Prostate gland (tissue), 2 donors: ENCODE measurements at regions of chr15 and their contacts with region 1.

Region 1: DNA sequence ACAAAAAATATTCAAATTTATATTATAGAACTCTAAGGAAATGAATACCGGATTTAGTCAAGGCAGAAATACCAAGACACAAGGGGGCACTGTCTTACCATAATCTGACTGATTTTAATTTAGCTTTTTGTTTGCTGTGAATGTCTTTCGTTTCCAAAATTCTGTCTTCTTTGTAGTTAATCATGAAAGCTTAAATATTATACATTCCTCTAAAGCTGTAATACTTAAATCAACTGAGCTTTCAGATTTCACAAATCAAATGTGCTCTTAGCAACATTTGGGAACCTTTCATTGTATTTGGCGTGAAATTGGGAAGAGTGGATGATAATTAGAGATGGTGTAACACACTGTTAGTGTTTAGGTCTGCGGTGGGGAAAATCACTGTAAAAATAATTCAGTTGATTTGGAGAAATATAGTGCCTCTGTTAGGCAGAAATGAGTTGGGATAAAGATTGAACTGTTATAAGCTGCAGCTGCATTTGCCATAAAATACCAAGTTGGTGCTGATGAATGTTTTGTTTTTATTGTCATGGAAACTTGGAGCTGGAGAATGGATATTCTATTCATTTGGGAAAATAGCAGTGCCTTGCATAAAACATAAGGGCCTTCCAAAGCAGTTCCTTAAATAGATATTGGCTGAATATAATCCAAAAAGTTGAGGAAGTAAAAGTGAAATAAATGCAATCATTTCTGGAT is 228.2 kb downstream of the TCF12 start:
- DNase-seq: peak; percentile 37
- H3K4me3 ChIP-seq: no peak overlapping the region
- H3K27ac ChIP-seq: no peak overlapping the region
- H3K4me1 ChIP-seq: peaks cover 5% of the 10 kb centered on the region
- H3K27me3 ChIP-seq: no peaks in the 10 kb centered on the region
- CTCF ChIP-seq: peak; percentile 14 to 84 (median 72)
- POLR2A ChIP-seq: no peak

Region 2: DNA sequence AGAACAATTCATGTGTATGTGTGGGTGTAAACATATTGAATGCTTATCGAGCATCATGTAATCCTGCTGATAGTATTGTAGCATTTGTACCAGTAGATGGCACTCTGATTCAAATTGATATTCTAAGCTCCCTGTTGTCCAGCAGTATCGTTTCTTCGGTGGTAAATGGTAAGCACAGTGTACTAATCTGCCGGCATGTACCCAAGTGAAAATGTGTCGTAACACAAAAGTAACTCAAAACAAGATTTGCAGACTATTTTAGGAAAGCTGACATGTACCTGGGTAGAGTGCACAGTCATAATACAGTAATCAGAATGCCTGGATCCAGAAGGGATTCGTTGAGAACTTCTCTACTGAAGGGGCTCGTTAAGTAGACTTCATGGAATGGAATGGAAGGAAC is 650.0 kb before region 1 on chr15:
- intact Hi-C with region 1: loop called (anchors 5 kb)
- DNase-seq: peak; percentile 17
- H3K4me3 ChIP-seq: no peak overlapping the region
- H3K27ac ChIP-seq: no peak overlapping the region
- H3K4me1 ChIP-seq: no peaks in the 10 kb centered on the region
- H3K27me3 ChIP-seq: no peaks in the 10 kb centered on the region
- CTCF ChIP-seq: peak in 3 of 4 experiments; percentile 50 to 68 (median 66)
- POLR2A ChIP-seq: no peak

Region 3: DNA sequence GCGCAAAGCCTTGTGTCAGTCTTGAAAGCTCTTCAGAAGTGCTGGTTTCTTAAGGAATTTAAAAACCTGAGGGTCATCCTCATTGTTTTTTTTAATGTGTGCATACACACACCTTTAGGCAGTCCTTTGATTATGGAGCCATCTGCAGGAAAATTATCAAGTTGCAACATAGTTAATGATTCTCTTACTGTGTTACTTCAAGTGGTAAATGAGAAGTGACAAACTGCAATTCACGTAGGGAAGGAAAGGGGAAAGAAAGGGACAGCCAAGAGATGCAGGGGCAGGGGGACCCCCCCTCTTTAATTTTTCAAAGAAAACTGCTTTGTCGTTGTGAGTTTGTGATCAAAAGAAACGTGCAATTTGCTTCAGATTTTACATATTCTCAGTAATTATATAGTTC is 67.2 kb after region 1 on chr15:
- intact Hi-C with region 1: loop called (anchors 5 kb)
- DNase-seq: peak; percentile 17
- H3K4me3 ChIP-seq: no peak overlapping the region
- H3K27ac ChIP-seq: no peak overlapping the region
- H3K4me1 ChIP-seq: no peaks in the 10 kb centered on the region
- H3K27me3 ChIP-seq: no peaks in the 10 kb centered on the region
- CTCF ChIP-seq: peak; percentile 19 to 67 (median 52)
- POLR2A ChIP-seq: no peak

Region 4: DNA sequence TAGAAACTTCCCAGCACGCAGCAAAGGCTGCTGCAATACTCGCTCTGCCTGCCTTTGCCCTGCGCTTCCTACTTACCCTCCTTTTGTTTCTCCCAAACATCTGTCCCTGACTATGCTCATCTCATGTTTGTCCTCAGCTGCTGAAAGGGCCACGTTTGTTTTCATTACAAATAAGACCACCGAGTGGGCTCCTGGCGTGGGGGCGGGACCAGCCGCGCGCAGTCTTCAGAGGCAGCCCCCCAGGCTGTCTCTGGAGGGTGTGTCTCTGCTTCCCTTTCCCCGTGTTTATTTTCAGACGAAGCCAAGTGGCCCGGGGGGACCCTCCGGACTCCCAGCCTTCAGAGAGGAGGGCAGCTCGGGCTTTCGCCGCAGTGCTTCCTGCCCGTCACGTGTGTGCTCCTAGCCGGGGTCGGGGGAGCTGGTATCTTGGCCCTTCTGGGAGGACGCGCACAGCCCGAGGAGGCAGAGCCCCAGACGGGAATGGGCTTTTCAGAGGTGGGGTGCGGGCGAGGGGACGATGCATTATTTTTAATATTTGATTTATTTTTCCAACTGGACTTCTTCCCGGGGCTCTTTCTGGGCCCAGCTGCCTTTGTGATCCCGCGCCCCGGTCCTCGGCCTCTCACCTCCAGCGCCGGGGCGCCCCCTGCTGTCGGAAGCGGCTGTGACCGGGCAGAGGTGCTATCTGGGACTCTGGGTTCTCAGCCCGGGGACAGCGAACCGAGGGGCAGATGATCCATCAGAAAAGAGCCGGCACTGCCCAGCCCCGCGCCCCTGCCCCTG is 159.7 kb after region 1 on chr15:
- intact Hi-C with region 1: loop called (anchors 2 kb)
- DNase-seq: peak; percentile 78
- H3K4me3 ChIP-seq: peak overlapping the region; percentile 30 to 34
- H3K27ac ChIP-seq: peak overlapping the region; percentile 65 to 79
- H3K4me1 ChIP-seq: peaks cover 10% of the 10 kb centered on the region
- H3K27me3 ChIP-seq: no peaks in the 10 kb centered on the region
- CTCF ChIP-seq: peak; percentile 63 to 83 (median 74)
- POLR2A ChIP-seq: no peak

Region 5: GRCh38 chr15:57345584-57345983 is 198.9 kb after region 1 on chr15:
- intact Hi-C with region 1: no loop called
- DNase-seq: no peak
- H3K4me3 ChIP-seq: no peak overlapping the region
- H3K27ac ChIP-seq: no peak overlapping the region
- H3K4me1 ChIP-seq: no peaks in the 10 kb centered on the region
- H3K27me3 ChIP-seq: no peaks in the 10 kb centered on the region
- CTCF ChIP-seq: peak in 2 of 4 experiments; percentile 29 to 37
- POLR2A ChIP-seq: no peak

Region 6: GRCh38 chr15:57541805-57542504 is 395.3 kb after region 1 on chr15:
- intact Hi-C with region 1: loop called (anchors 10 kb)
- DNase-seq: peak; percentile 74
- H3K4me3 ChIP-seq: no peak overlapping the region
- H3K27ac ChIP-seq: peak overlapping the region in 1 of 2 donors; percentile 12
- H3K4me1 ChIP-seq: peaks cover 11% of the 10 kb centered on the region
- H3K27me3 ChIP-seq: no peaks in the 10 kb centered on the region
- CTCF ChIP-seq: peak; percentile 38 to 82 (median 72)
- POLR2A ChIP-seq: no peak